ENCODE measurements at regions of chr2 and their contacts with region 1.

Region 1: DNA sequence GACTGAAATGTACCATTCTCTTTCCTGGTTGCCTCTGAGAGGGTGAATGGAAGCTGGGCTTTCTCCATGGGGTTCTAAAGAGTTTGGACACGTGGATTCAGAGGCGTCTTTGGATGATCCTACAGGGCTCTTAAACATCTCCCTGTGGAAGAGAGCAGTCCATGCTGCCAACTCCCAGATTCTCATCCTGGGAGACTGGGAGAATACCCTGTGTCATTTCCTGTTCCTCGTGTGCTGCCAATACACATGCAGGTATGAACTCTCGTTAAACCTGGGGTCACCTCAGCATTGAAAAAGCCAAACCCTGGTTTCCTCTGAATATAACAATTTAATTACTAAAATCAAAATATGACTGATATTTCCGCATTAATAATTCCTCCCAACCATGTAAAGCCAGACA is 73.3 kb upstream of the NT5C1B start:
- DNase-seq: no peak

Region 2: GRCh38 chr2:18674309-18674708 is 11.6 kb after region 1 on chr2:
- CTCF ChIA-PET with region 1: no interaction called
- POLR2A ChIA-PET with region 1: no interaction called
- DNase-seq: no peak

Region 3: GRCh38 chr2:18684206-18685038 is 21.7 kb after region 1 on chr2:
- CTCF ChIA-PET with region 1: no interaction called
- POLR2A ChIA-PET with region 1: no interaction called
- DNase-seq: no peak

Region 4: GRCh38 chr2:18724371-18725145 is 61.9 kb after region 1 on chr2:
- CTCF ChIA-PET with region 1: interaction called, 10 read pairs
- POLR2A ChIA-PET with region 1: no interaction called
- DNase-seq: no peak

Measured in HEK293T (cell line).